Head of caudate nucleus (tissue), 42 donors: ENCODE measurements at regions of chr15 and their contacts with region 1.

Region 1: GRCh38 chr15:92714477-92715401 is 59.2 kb upstream of the FAM174B start:
- DNase-seq: peak; percentile 47 to 94 (median 82)

Region 2: GRCh38 chr15:92097474-92098178 is 617.1 kb before region 1 on chr15:
- intact Hi-C with region 1: loop called (anchors 10 kb)
- DNase-seq: peak in 40 of 42 donors; percentile 16 to 83 (median 57)

Region 3: DNA sequence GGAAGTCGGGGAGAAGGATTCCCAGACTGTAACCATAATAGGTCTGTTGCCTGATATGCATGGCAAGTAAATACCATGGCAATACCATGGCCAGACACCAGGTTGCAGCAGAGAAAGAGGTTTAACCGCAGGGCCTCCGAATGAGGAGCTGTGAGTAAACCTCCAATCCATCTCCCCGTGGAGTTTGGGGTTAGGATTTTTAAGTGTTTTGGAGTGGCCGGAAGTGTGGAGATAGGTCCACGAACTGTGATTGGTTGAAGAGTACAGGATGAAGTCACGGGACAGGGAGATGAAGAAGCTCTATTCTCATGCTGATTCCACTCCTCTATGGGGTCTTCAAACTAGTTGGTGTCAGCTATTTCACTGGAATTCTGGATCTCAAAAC is 193.1 kb before region 1 on chr15:
- intact Hi-C with region 1: loop called (anchors 5 kb)
- DNase-seq: peak; percentile 22 to 91 (median 79)

Region 4: DNA sequence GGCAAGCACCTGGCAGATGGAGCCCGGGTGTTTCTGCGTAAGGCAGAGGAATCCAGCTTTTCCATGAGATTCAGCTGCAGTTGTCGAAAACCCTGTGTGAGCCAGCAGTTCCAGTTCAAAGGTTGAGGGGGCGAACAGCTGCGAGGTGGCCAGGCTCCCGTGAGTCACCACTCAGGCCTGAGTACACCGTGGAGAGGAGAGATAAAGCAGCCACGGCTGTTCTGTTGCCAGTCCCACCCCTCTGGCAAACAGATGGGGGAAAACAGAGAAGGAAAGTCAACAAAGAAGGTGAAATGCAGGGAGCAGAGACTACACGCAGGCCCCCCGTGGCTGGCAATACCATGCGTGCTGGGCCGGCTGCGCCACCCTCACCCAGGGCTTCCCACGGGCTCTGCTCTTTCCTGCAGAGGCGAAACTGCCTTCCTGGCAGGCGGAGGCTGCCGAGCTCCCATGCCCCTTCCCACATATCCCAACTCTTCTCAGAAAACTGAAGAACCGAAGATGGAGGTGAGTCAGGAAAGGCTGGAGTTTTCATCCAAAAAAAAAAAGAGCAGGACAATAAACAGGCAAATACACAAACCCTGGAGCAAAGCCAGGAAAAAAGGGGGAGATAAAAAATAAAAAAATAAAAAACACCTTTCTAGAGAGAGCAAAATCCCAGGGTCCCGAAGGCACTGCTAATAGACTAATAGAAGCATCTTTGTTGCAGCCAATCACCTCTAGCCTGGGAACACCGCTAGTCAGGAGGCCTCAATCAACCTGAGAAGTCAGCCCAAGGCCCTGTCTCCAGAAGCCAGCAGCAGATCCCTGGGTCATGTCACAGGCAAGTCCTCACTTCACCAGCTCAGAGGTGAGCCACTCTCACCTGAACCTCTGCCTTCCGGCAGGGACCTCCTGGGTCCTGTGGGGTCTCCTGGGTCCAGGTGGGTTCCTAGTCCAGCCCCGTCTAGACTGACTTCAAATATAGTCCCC is 96.9 kb before region 1 on chr15:
- intact Hi-C with region 1: loop called (anchors 10 kb)
- DNase-seq: peak in 5 of 42 donors; percentile 5 to 29 (median 22)

Region 5: DNA sequence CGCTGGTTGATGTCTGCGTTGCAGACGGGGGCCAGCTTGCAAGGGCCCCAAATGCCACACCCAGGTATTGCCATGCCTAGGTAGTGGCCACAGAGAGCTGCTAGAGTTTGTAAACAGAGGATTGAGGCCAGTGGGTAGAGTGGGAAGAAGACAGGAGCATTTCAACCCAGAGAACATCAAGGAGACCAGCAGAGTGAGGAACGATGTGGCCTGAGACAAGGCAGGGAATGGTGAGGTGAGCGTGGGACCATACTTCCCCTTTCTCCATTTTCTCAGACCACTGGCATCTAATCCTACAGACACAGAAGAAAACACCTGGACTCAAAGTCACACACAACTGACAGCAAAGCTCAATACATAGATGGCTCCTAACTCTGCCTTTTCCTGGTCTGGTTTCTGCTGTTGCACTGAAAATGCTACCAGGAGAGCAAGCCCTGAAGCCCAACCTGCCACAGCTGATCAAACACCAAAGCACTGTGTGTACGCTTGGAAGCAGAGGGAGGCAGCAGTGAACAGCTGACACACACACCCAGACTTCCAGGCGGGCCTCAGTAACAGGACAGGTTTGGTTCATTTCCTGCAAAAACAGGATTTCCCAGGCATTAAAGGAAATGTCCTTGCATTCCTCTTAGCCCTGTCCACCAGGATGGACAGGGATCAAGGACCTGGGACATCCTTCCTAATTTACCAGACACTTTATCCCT is 60.8 kb before region 1 on chr15:
- intact Hi-C with region 1: no loop called
- DNase-seq: peak in 36 of 42 donors; percentile 19 to 78 (median 50)